MCF 10A (cell line): ENCODE measurements at regions of chr7 and their contacts with region 1.

Region 1: DNA sequence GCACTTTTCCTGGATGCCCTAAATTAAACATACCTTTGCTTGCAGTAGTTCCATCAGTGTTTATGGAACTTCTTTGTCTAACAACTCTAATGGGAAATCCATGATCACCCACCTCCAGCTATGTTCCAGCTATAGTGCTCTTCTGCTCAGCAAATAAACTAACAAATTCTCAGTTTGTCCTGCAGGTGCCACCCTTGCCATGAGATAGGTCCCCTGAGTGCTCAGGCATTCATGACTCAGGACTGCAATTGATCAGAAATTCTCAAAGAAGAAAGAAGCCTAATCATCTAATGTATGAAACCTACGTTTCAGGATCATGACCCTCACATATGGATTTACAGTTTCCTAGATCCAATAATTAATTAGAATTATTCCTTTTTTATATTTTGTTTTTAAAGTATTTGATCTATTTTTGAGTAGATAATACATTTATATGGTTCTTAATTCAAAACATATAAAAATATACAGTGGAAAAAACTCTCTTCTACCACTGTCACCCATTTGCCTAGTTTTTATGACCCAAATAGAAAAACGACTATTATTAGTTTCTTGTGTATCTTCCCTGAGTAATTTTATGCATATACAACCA is 48.7 kb upstream of the DYNC1I1 start:
- DNase-seq: peak; percentile 67
- H3K4me3 Mint-ChIP-seq: no peak overlapping the region
- H3K27ac Mint-ChIP-seq: no peak overlapping the region
- H3K4me1 Mint-ChIP-seq: no peaks in the 10 kb centered on the region
- H3K27me3 Mint-ChIP-seq: peaks cover 86% of the 10 kb centered on the region
- CTCF ChIP-seq: peak; percentile 68

Region 2: DNA sequence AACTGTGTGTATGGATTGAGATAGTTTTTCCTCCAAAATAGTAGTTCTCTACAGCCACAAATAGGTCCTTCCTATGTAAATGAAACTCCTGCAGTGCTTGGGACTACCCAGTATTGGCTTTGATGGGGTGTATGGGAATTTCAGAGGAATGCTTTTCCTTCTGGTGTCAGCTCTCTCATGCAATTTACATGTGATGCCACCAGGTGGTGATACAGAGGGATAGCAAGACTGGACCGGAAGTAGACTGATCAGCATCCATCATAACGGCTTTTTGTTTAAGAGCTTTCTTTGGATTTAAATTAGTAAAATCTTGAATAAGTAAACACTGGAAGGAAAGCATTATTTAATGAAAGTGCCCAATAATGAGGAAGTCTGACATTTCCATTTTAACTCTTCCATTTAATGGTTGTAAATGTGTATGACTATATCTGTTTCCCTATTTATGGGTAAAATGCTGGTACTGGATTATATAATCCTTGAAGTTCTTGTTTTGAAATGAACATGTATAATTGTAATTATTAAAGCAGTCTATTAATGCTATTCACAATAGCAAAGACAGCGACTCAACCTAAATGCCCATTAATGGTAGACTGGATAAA is 71.3 kb after region 1 on chr7:
- CTCF ChIA-PET with region 1: no interaction called
- POLR2A ChIA-PET with region 1: no interaction called
- intact Hi-C with region 1: loop called (anchors 1 kb)
- DNase-seq: peak; percentile 53
- H3K4me3 Mint-ChIP-seq: no peak overlapping the region
- H3K27ac Mint-ChIP-seq: no peak overlapping the region
- H3K4me1 Mint-ChIP-seq: no peaks in the 10 kb centered on the region
- H3K27me3 Mint-ChIP-seq: peaks cover 46% of the 10 kb centered on the region
- CTCF ChIP-seq: peak; percentile 50

Region 3: GRCh38 chr7:95865716-95866371 is 142.2 kb after region 1 on chr7:
- CTCF ChIA-PET with region 1: interaction called, 151 read pairs
- POLR2A ChIA-PET with region 1: no interaction called
- intact Hi-C with region 1: loop called (anchors 1 kb)
- DNase-seq: peak; percentile 39
- H3K4me3 Mint-ChIP-seq: no peak overlapping the region
- H3K27ac Mint-ChIP-seq: no peak overlapping the region
- H3K4me1 Mint-ChIP-seq: no peaks in the 10 kb centered on the region
- H3K27me3 Mint-ChIP-seq: peaks cover 57% of the 10 kb centered on the region
- CTCF ChIP-seq: peak; percentile 15